ENCODE measurements at regions of chr4 and their contacts with region 1.

Region 1: GRCh38 chr4:154349829-154350228 is 141.8 kb downstream of the DCHS2 start:
- DNase-seq: no peak
- H3K4me3 ChIP-seq: no peak overlapping the region
- H3K27ac ChIP-seq: no peak overlapping the region
- H3K4me1 ChIP-seq: no peaks in the 10 kb centered on the region
- H3K27me3 ChIP-seq: no peaks in the 10 kb centered on the region
- CTCF ChIP-seq: peak; percentile 15

Region 2: GRCh38 chr4:153785910-153786721 is 563.7 kb before region 1 on chr4:
- intact Hi-C with region 1: loop called (anchors 10 kb)
- DNase-seq: no peak
- H3K4me3 ChIP-seq: no peak overlapping the region
- H3K27ac ChIP-seq: no peak overlapping the region
- H3K4me1 ChIP-seq: no peaks in the 10 kb centered on the region
- H3K27me3 ChIP-seq: peaks cover 40% of the 10 kb centered on the region
- CTCF ChIP-seq: peak; percentile 18

Measured in colonic mucosa (tissue), 4 donors.